CD4-positive, alpha-beta T cell (primary cell): ENCODE measurements at regions of chr18 and their contacts with region 1.

Region 1: DNA sequence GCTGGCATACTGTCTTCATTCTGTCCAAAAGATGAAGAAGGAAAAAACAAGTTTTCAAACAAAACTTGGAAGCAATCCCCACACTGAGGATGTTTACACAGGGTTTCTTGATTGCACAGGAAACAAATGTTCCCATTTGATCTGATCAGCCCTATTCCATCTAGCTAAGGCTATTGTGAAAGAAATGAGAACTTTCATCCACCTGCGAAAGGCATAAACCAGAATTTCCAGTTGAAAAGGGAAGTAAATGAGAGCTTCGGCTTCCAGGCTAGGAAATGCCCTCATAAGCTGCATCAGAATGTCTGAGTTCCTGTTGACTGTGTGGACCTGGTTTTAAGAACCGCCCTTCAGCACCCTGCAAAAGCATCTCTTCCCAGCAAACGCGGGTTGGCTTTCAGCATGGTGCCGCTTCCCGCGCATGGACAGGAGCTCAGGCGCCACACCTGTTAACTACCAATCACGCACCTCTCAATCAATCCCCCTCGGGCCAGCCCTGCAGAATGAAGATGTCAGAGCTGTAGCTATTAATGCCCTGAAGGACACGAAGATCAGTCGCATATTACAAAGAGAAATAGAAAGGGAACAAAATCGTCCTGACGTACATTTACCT is 850.4 kb downstream of the GALR1 start:
- DNase-seq: no peak
- ATAC-seq: no peak
- H3K4me3 ChIP-seq: no peak overlapping the region
- H3K4me3 Mint-ChIP-seq: no peak overlapping the region
- H3K27ac ChIP-seq: no peak overlapping the region
- H3K27ac Mint-ChIP-seq: no peak overlapping the region
- H3K4me1 ChIP-seq: no peaks in the 10 kb centered on the region
- H3K4me1 Mint-ChIP-seq: no peaks in the 10 kb centered on the region
- H3K27me3 ChIP-seq: no peaks in the 10 kb centered on the region
- H3K27me3 Mint-ChIP-seq: no peaks in the 10 kb centered on the region
- CTCF ChIP-seq: no peak

Region 2: DNA sequence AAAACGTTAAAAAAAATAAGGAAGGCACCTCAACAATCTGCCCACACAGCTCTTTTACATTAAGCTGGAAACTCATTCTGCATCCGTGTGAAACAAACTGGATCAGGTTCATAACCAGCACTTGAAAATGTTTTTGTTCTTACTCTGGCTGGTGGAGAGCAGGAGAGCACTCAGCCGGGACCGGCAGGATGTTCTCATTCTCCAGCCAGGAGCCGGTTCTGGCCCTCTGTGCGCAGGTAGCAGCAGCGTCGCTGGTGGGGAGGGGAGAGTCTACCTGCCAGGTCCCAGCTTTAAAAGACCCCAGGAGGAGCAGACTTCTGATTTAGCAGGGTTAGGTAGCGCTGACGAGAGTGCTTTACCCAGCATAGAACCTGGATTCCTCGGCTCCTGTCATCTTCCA is 44.6 kb after region 1 on chr18:
- CTCF ChIA-PET with region 1: no interaction called
- POLR2A ChIA-PET with region 1: no interaction called
- intact Hi-C with region 1: no loop called
- DNase-seq: no peak
- ATAC-seq: no peak
- H3K4me3 ChIP-seq: no peak overlapping the region
- H3K4me3 Mint-ChIP-seq: no peak overlapping the region
- H3K27ac ChIP-seq: no peak overlapping the region
- H3K27ac Mint-ChIP-seq: no peak overlapping the region
- H3K4me1 ChIP-seq: no peaks in the 10 kb centered on the region
- H3K4me1 Mint-ChIP-seq: no peaks in the 10 kb centered on the region
- H3K27me3 ChIP-seq: no peaks in the 10 kb centered on the region
- H3K27me3 Mint-ChIP-seq: peaks cover 2% of the 10 kb centered on the region
- CTCF ChIP-seq: no peak

Region 3: DNA sequence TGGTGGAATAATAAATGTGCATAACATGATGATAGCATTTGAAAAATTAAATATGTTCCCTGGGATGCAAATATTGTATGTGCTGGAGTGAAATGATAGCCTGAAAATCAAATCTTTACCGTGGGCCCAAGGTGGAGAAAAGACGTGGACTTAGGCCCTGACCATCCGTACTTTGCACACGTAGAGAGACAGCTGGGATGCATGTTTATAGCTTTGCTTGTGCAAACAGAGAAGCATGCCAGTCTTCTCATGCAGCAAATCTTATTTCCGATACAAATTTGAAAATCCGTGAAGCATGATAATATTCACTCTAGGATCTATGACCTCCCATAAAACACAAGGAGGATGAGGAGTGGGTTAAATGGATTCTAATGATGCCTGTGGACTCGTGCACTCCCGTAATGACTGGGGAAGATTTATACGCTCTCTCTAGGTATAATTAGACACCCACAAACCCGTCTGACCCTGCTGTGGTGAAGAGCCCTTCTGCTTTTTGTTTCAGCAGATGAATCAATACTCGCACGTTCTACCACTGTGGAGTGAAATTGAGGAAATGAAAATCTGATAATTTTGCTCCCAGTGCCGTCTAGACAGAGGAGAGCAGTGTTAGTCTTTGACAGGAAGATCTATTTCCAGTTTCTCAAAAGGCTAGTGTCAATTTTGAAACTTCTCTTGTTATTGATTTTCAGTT is 69.2 kb after region 1 on chr18:
- CTCF ChIA-PET with region 1: no interaction called
- POLR2A ChIA-PET with region 1: no interaction called
- intact Hi-C with region 1: loop called in 1 of 2 experiments (anchors 10 kb)
- DNase-seq: no peak
- ATAC-seq: no peak
- H3K4me3 ChIP-seq: no peak overlapping the region
- H3K4me3 Mint-ChIP-seq: no peak overlapping the region
- H3K27ac ChIP-seq: no peak overlapping the region
- H3K27ac Mint-ChIP-seq: no peak overlapping the region
- H3K4me1 ChIP-seq: no peaks in the 10 kb centered on the region
- H3K4me1 Mint-ChIP-seq: no peaks in the 10 kb centered on the region
- H3K27me3 ChIP-seq: no peaks in the 10 kb centered on the region
- H3K27me3 Mint-ChIP-seq: no peaks in the 10 kb centered on the region
- CTCF ChIP-seq: no peak